Activated CD4-positive, alpha-beta T cell treated with anti-CD3 and anti-CD28 coated beads, Interleukin-2, amount 10 ng/mL, durations not matched to agents 24 days and 14 days (primary cell): ENCODE measurements at regions of chr6 and their contacts with region 1.

Region 1: DNA sequence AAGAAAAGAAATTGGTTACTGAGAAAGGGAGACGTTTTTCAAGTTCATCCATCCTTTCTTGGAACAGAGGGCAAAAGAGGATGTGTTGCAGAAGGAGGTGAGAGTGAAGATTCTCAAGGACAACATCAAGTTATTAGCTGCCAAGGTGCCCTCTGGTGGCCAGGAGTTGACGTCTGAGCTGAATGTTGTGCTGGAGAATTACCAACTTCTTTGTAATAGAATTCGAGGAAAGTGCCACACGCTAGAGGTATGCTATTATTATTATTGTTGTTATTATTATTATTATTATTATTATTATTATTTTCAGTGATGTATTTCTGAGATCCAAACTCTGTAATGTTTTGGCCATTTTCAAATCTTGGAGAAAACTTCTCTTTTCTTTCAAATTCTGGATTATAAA is 197.0 kb downstream of the UTRN start:
- DNase-seq: peak; percentile 89
- H3K4me3 Mint-ChIP-seq: no peak overlapping the region
- H3K27ac Mint-ChIP-seq: no peak overlapping the region
- H3K4me1 Mint-ChIP-seq: peaks cover 9% of the 10 kb centered on the region
- H3K27me3 Mint-ChIP-seq: no peaks in the 10 kb centered on the region

Region 2: DNA sequence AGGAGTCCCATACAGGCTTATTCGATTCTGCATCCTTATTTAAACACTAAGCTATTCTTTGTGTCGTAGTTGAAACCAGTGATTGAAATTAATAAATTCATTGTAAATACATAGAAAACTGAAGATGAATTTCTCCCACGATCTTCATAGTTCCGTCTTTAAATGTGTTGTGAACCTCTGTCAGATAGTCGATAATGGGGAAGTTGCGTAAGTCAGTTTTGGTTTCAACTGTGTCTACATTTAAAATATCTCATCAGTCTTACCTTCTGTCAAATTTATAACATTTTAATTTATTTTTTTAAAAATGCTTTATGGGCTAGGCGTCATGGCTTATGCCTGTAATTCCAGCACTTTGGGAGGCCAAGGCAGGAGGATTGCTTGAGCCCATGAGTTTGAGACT is 319.2 kb before region 1 on chr6:
- intact Hi-C with region 1: no loop called
- DNase-seq: no peak
- H3K4me3 Mint-ChIP-seq: no peak overlapping the region
- H3K27ac Mint-ChIP-seq: no peak overlapping the region
- H3K4me1 Mint-ChIP-seq: peaks cover 9% of the 10 kb centered on the region
- H3K27me3 Mint-ChIP-seq: no peaks in the 10 kb centered on the region

Region 3: GRCh38 chr6:144262470-144263369 is 219.4 kb before region 1 on chr6:
- intact Hi-C with region 1: loop called (anchors 1 kb)
- DNase-seq: peak; percentile 71
- H3K4me3 Mint-ChIP-seq: no peak overlapping the region
- H3K27ac Mint-ChIP-seq: no peak overlapping the region
- H3K4me1 Mint-ChIP-seq: no peaks in the 10 kb centered on the region
- H3K27me3 Mint-ChIP-seq: peaks cover 4% of the 10 kb centered on the region

Region 4: DNA sequence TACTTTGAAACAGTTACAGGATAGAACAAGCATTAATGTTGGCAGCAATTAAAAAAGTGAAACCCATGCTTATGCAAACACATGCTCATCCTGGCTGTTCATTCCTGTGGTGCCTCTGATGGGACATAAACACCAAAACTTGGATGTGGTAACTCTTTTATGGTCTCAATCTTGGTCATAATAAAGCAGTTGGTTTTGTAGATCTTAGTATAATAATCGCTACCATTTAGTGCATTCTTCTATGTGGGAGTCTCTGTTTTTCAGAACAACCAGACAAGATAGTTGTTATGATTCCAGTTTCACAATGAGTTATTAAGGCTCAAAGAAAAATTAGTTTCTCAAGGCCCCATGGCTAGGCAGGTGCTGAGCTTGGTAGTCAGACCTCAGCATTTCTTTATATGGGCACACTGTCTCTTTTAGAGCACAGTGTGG is 13.0 kb before region 1 on chr6:
- intact Hi-C with region 1: no loop called
- DNase-seq: no peak
- H3K4me3 Mint-ChIP-seq: peak overlapping the region; percentile 74
- H3K27ac Mint-ChIP-seq: peak overlapping the region; percentile 90
- H3K4me1 Mint-ChIP-seq: peaks cover 22% of the 10 kb centered on the region
- H3K27me3 Mint-ChIP-seq: no peaks in the 10 kb centered on the region

Region 5: DNA sequence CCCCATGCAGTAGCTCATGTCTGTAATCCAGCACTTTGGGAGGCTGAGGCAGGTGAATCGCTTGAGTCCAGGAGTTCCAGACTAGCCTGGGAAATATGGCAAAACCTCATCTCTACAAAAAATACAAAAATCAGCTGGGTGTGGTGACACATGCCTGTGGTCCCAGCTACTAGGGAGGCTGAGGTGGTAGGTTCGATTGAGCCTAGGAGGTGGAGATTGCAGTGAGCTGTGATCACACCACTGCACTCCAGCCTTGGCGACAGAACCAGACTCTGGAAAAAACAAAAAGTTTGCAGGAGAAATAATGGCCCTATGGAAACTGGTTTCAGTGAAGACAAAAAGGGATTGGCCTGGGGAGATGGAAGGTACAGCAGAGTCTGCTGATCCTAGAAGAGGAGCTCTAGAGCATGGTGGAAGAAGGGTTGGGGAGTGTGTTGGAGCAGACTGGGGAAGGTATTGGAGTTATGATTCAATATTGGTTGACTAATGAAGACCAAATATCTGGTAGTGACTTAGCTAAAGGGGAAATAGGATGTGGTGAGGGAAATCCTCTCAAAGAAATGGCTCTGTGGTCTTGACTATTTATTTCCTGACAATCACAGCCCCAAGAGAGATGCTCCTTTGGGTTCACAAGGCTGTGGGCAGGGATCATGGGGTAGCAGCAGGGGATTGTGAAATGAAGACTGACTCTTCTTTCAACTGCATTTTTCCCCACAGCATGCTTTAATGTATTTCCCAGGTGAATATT is 84.9 kb after region 1 on chr6:
- intact Hi-C with region 1: no loop called
- DNase-seq: peak; percentile 62
- H3K4me3 Mint-ChIP-seq: no peak overlapping the region
- H3K27ac Mint-ChIP-seq: no peak overlapping the region
- H3K4me1 Mint-ChIP-seq: peaks cover 6% of the 10 kb centered on the region
- H3K27me3 Mint-ChIP-seq: no peaks in the 10 kb centered on the region